HEK293 (cell line): ENCODE measurements at regions of chr17 and their contacts with region 1.

Region 1: GRCh38 chr17:55601874-55602364 is 90.7 kb upstream of the SMIM36 start:
- H3K4me3 ChIP-seq: no peak overlapping the region
- H3K27ac ChIP-seq: no peak overlapping the region
- H3K4me1 ChIP-seq: no peaks in the 10 kb centered on the region
- CTCF ChIP-seq: no peak

Region 2: DNA sequence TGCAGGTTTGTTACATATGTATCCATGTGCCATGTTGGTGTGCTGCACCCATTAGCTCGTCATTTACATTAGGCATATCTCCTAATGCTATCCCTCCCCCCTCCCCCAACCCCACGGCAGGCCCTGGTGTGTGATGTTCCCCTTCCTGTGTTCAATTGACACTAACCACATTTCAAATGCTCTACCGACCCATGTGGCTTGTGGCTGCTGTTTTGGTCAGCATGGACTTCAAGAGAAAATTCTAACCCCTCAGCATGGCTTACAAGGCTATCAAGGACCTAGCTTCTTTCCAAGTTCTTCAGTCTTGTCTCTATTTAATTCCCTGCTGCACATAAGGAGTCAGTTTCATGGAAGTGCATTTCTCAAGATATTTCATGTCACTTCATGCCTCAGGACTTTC is 233.2 kb before region 1 on chr17:
- CTCF ChIA-PET with region 1: no interaction called
- POLR2A ChIA-PET with region 1: no interaction called
- H3K4me3 ChIP-seq: no peak overlapping the region
- H3K27ac ChIP-seq: no peak overlapping the region
- H3K4me1 ChIP-seq: no peaks in the 10 kb centered on the region
- CTCF ChIP-seq: no peak

Region 3: GRCh38 chr17:55466671-55467070 is 135.2 kb before region 1 on chr17:
- CTCF ChIA-PET with region 1: no interaction called
- POLR2A ChIA-PET with region 1: no interaction called
- H3K4me3 ChIP-seq: no peak overlapping the region
- H3K27ac ChIP-seq: no peak overlapping the region
- H3K4me1 ChIP-seq: peaks cover 4% of the 10 kb centered on the region; the same call in 1 of the 2 replicates
- CTCF ChIP-seq: no peak

Region 4: DNA sequence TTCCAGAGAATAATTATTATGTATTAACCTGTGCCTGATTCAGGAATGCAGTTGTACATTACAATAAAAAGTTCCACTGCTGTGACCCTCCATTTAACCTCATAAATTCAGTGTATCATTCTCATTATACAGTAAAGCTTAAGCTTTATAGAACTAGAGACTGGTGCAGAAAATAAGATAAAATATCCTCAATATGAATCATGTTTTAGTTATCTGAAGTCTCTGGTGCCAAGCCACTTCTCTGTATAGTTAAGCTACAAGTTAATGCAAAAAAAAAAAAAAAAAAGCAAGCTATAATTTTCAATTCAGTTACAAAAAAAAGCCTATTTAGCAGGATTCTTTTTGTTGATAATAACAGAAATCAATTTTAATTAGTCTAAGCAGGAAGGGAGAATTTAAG is 68.3 kb before region 1 on chr17:
- CTCF ChIA-PET with region 1: interaction called, 70 read pairs
- POLR2A ChIA-PET with region 1: no interaction called
- H3K4me3 ChIP-seq: no peak overlapping the region
- H3K27ac ChIP-seq: no peak overlapping the region
- H3K4me1 ChIP-seq: no peaks in the 10 kb centered on the region
- CTCF ChIP-seq: no peak

Region 5: DNA sequence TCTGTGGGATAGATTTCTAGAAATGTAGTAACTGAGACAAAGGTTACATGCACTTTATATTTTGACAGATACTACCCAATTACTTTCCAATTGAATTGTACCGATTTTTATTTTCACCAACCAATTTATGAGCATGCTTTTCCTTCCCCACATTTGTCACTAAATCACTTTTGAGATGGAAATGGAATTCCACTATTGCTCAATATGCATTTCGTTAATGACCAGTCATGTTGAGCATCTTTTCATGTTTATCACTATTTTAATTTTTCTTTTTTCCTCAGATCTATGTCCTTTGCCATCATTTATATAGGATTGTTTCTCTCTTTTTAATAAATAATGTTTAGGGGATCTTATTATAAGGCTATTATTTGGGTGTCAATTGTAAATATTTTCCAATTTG is 12.1 kb after region 1 on chr17:
- CTCF ChIA-PET with region 1: interaction called, 13 read pairs
- POLR2A ChIA-PET with region 1: interaction called, 3 read pairs
- H3K4me3 ChIP-seq: no peak overlapping the region
- H3K27ac ChIP-seq: no peak overlapping the region
- H3K4me1 ChIP-seq: no peaks in the 10 kb centered on the region
- CTCF ChIP-seq: no peak

Region 6: GRCh38 chr17:55845385-55845784 is 243.5 kb after region 1 on chr17:
- CTCF ChIA-PET with region 1: no interaction called
- POLR2A ChIA-PET with region 1: no interaction called
- H3K4me3 ChIP-seq: no peak overlapping the region
- H3K27ac ChIP-seq: no peak overlapping the region
- H3K4me1 ChIP-seq: no peaks in the 10 kb centered on the region
- CTCF ChIP-seq: no peak